ENCODE measurements at regions of chr15 and their contacts with region 1.

Region 1: GRCh38 chr15:50182219-50183013 is 420 bp downstream of the SLC27A2 start:
- DNase-seq: peak; percentile 68
- H3K4me3 Mint-ChIP-seq: peak overlapping the region; percentile 98
- H3K27ac Mint-ChIP-seq: peak overlapping the region; percentile 78
- H3K4me1 Mint-ChIP-seq: peaks cover 34% of the 10 kb centered on the region
- H3K27me3 Mint-ChIP-seq: peaks cover 17% of the 10 kb centered on the region

Region 2: DNA sequence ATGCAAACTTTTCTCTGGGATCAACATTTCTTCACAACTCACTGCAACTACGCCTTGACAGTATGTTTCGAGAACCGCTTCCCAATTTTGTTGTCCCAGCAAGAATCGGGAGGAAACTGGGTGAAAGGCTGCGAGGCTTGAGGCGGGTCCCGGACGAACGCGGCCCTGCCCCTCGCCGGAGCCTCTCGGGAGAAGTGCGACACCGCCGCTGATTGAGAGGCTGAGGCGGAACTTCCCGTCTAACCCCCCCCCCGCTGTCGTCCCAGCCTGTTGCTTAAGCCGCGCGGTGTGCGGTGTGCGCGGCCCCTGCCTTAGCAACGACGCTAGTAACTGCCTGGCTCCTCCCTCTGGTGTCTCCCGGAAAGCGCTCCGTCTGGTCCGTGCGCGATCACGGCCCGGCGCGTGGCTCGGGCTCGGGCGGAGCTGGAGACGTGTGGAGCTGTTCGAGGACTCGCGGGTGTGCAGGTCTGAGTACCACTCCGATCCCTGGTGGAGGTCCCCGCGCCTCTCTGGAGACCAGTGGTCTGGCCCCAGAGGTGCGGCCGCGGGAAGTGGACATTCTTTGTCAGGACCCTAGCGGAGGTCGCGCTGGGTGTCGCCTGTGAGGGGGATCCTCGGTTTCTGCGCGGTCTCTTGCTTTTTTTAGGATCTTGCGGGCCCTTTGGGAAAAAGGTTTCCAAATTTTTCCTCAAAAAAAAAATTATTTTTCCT is 561.6 kb before region 1 on chr15 and contains the starts of genes DTWD1 and FAM227B:
- CTCF ChIA-PET with region 1: interaction called, 3 read pairs
- POLR2A ChIA-PET with region 1: no interaction called
- intact Hi-C with region 1: loop called (anchors 2 kb)
- DNase-seq: peak; percentile 96
- H3K4me3 Mint-ChIP-seq: peak within 1 kb of the TSS; percentile 94
- H3K27ac Mint-ChIP-seq: peak within 1 kb of the TSS; percentile 92
- H3K4me1 Mint-ChIP-seq: peaks cover 32% of the 10 kb centered on the region
- H3K27me3 Mint-ChIP-seq: no peaks in the 10 kb centered on the region
- total RNA-seq, gene DTWD1: 14.3 to 18.5 TPM
- total RNA-seq, gene FAM227B: 2.8 to 3.8 TPM

Region 3: GRCh38 chr15:49847937-49848823 is 334.2 kb before region 1 on chr15:
- CTCF ChIA-PET with region 1: no interaction called
- POLR2A ChIA-PET with region 1: no interaction called
- intact Hi-C with region 1: no loop called
- DNase-seq: no peak
- H3K4me3 Mint-ChIP-seq: no peak overlapping the region
- H3K27ac Mint-ChIP-seq: no peak overlapping the region
- H3K4me1 Mint-ChIP-seq: no peaks in the 10 kb centered on the region
- H3K27me3 Mint-ChIP-seq: no peaks in the 10 kb centered on the region

Region 4: DNA sequence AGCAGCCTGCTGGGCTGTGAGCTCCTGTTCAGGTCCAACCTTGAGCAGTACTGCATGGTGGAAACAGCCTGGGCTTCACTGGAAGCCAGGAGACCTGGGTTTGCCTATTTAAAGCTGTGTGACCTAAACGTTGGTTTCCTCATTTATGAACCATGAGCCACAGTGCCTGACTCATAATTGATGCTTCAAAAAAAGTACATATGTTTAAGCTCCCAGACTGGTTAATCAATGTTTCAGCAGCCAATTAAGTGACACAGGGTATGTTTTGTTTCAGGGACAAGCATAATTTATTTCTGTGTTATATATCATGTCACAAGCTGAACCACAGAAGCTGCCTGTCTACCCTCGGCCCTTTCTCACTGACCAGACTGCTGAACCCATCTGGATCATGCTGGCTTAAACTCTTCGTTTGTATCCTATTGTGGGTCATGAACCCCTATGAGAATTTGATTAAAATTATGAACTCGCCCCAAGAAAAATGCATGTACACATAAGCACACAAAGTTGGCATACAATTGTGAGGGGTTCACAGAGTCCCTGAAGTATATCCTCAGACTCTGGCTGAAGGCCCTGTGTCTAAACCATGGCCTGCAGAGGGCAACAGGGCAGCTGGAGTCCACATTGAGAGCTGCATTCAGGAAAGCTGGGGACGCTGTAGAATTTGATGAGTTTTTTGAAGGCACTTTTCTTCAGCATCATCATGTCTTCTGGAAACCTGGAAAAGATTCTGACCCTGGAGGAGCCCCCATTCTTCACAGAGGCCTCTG is 59.5 kb after region 1 on chr15:
- CTCF ChIA-PET with region 1: interaction called, 3 read pairs
- POLR2A ChIA-PET with region 1: interaction called, 3 read pairs
- intact Hi-C with region 1: loop called (anchors 1 kb)
- DNase-seq: peak; percentile 41
- H3K4me3 Mint-ChIP-seq: no peak overlapping the region
- H3K27ac Mint-ChIP-seq: peak overlapping the region; percentile 53
- H3K4me1 Mint-ChIP-seq: peaks cover 22% of the 10 kb centered on the region
- H3K27me3 Mint-ChIP-seq: no peaks in the 10 kb centered on the region

Region 5: GRCh38 chr15:50247819-50248655 is 65.6 kb after region 1 on chr15:
- CTCF ChIA-PET with region 1: no interaction called
- POLR2A ChIA-PET with region 1: no interaction called
- intact Hi-C with region 1: loop called (anchors 2 kb)
- DNase-seq: peak; percentile 82
- H3K4me3 Mint-ChIP-seq: peak overlapping the region; percentile 75
- H3K27ac Mint-ChIP-seq: peak overlapping the region; percentile 97
- H3K4me1 Mint-ChIP-seq: peaks cover 35% of the 10 kb centered on the region
- H3K27me3 Mint-ChIP-seq: no peaks in the 10 kb centered on the region

Region 6: DNA sequence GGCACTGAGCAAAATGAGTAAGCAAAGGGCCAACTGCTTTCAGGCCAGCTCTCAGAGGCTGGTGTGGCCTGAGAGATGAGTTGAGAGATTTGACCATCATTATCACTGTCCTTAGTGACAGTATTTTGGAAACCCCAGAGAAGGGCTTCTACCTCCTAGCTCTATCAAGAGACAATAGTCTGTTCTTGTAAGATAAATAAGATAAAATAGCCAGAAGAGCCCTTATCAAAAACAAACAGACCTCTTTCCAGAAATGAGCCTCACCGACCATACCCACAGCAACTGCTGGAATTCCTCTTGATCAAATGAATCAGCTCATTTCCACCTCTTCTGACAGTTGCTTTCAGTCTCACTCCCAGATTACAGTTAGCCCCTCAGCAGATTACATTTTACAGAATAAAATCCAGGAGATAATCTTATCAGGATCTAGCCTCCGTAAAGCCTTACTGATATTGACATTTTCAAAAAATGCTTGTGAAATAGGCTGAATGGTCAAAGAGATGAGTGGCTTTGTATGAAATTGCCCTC is 78.6 kb after region 1 on chr15:
- CTCF ChIA-PET with region 1: interaction called, 4 read pairs
- POLR2A ChIA-PET with region 1: interaction called, 24 read pairs
- intact Hi-C with region 1: loop called (anchors 1 kb)
- DNase-seq: peak; percentile 41
- H3K4me3 Mint-ChIP-seq: peak overlapping the region; percentile 53
- H3K27ac Mint-ChIP-seq: peak overlapping the region; percentile 99
- H3K4me1 Mint-ChIP-seq: peaks cover 68% of the 10 kb centered on the region
- H3K27me3 Mint-ChIP-seq: no peaks in the 10 kb centered on the region

Region 7: DNA sequence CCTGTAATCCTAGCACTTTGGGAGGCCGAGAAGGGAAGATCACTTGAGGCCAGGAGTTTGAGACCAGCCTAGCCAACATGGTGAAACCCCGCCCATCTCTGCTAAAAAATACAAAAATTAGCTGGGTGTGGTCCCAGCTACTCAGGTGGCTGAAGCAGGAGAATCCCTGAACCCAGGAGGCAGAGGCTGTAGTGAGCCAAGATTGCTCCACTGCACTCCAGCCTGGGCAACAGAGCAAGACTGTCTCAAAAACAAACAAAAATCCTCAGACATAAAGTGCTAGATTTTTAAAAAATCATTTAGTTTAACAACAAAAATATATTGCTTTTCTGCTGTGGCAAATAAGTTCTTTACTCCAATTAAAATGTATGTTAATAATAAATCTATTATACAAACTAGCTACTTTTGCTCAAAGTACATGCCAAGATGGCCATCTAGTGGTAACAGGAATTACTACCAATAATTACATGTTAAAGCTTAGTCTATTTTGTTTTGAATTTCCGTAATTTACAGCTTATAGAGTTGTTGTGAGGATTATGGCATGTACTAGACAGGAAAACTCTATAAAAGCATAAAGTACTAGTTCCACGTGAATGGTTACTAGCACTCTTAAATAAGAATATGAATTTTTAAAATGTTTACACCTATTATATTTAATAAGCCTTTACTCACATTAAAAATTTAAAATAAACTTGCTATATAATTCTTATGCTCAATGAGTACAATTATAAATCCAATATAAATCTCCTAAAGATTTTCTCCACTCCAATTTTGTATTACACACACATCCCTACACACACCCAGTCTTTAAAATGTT is 133.6 kb after region 1 on chr15:
- CTCF ChIA-PET with region 1: interaction called, 26 read pairs
- POLR2A ChIA-PET with region 1: no interaction called
- intact Hi-C with region 1: loop called (anchors 1 kb)
- DNase-seq: no peak
- H3K4me3 Mint-ChIP-seq: no peak overlapping the region
- H3K27ac Mint-ChIP-seq: no peak overlapping the region
- H3K4me1 Mint-ChIP-seq: peaks cover 22% of the 10 kb centered on the region
- H3K27me3 Mint-ChIP-seq: no peaks in the 10 kb centered on the region

Region 8: DNA sequence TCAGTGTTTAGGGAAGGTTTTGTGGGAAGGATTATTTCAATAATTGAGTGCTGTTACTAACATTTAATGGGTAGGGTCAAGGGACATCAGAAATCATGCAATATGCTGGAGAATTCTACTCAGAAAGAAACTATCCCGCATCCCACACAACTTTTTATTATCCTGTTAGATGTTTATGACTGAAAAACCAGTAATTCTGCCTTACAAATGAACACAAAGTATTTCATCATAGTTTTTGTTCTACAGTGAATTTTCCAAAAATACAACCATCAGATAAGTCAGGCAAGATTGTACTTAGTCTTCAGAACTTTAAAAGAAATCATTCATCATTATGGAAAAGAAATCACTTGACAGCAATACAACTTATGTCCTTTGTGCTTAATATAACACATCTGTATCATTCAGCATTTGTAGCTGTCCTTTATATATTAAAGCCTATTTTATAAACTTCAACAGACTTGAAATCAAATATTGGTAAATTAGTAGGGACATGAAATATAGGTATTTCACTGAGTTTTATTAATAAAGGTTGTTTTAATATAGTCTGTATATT is 442.3 kb after region 1 on chr15:
- CTCF ChIA-PET with region 1: no interaction called
- POLR2A ChIA-PET with region 1: no interaction called
- intact Hi-C with region 1: no loop called
- DNase-seq: no peak
- H3K4me3 Mint-ChIP-seq: no peak overlapping the region
- H3K27ac Mint-ChIP-seq: peak overlapping the region; percentile 40
- H3K4me1 Mint-ChIP-seq: peaks cover 21% of the 10 kb centered on the region
- H3K27me3 Mint-ChIP-seq: no peaks in the 10 kb centered on the region

Region 9: GRCh38 chr15:50883903-50884302 is 701.5 kb after region 1 on chr15:
- CTCF ChIA-PET with region 1: no interaction called
- POLR2A ChIA-PET with region 1: no interaction called
- intact Hi-C with region 1: loop called (anchors 5 kb)
- DNase-seq: peak; percentile 34
- H3K4me3 Mint-ChIP-seq: no peak overlapping the region
- H3K27ac Mint-ChIP-seq: peak overlapping the region; percentile 56
- H3K4me1 Mint-ChIP-seq: peaks cover 65% of the 10 kb centered on the region
- H3K27me3 Mint-ChIP-seq: no peaks in the 10 kb centered on the region

Measured in activated CD4-positive, alpha-beta memory T cell treated with anti-CD3 and anti-CD28 coated beads for 36 hours (primary cell).